WTC11 (cell line): ENCODE measurements at regions of chr10 and their contacts with region 1.

Region 1: GRCh38 chr10:131670341-131670740 is 230.5 kb upstream of the PPP2R2D start:
- DNase-seq: no peak
- ATAC-seq: peak; percentile 93
- H3K4me3 Mint-ChIP-seq: no peak overlapping the region
- H3K27ac Mint-ChIP-seq: no peak overlapping the region
- H3K4me1 Mint-ChIP-seq: peaks cover 9% of the 10 kb centered on the region
- H3K27me3 Mint-ChIP-seq: peaks cover 9% of the 10 kb centered on the region
- CTCF ChIP-seq: no peak

Region 2: GRCh38 chr10:131651674-131652437 is 18.5 kb before region 1 on chr10:
- CTCF ChIA-PET with region 1: interaction called, 10 read pairs
- POLR2A ChIA-PET with region 1: no interaction called
- DNase-seq: peak; percentile 44
- ATAC-seq: peak; percentile 62
- H3K4me3 Mint-ChIP-seq: peak overlapping the region; percentile 42
- H3K27ac Mint-ChIP-seq: peak overlapping the region; percentile 71
- H3K4me1 Mint-ChIP-seq: peaks cover 71% of the 10 kb centered on the region
- H3K27me3 Mint-ChIP-seq: no peaks in the 10 kb centered on the region
- CTCF ChIP-seq: no peak